MCF 10A (cell line): ENCODE measurements at regions of chr9 and their contacts with region 1.

Region 1: DNA sequence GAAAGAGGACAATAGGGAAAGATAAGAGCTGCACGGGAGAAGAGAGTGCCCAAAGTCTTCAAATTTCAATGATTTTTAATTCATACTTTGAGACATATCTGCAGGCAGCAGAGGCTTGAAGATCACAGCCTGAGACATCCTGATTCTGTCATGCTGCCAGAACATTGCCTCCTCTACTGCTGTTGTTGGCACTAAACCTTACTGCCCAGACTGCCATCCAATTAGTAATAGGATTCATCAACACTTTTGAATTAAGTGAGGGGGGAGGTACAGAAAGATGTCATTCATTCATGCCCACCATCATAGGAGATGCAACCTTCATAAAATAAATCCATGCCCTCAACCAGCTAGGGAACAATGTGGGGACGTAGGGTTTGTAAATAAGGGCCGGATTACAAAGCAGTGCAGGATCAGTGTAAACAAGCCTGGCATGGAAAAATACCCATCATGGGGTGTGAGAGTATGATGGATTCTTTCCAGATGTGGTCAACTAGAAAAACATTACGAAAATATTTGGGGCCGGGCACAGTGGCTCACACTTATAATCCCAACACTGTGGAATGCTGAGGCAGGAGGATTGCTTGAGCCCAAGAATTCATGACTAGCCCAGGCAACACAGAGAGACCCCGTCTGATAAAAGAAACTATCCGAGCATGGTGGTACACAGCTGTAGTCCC is 122.1 kb upstream of the DAPK1 start:
- DNase-seq: peak; percentile 91
- H3K4me3 Mint-ChIP-seq: peak overlapping the region; percentile 26
- H3K27ac Mint-ChIP-seq: peak overlapping the region; percentile 85
- H3K4me1 Mint-ChIP-seq: peaks cover 34% of the 10 kb centered on the region
- H3K27me3 Mint-ChIP-seq: no peaks in the 10 kb centered on the region
- CTCF ChIP-seq: no peak

Region 2: DNA sequence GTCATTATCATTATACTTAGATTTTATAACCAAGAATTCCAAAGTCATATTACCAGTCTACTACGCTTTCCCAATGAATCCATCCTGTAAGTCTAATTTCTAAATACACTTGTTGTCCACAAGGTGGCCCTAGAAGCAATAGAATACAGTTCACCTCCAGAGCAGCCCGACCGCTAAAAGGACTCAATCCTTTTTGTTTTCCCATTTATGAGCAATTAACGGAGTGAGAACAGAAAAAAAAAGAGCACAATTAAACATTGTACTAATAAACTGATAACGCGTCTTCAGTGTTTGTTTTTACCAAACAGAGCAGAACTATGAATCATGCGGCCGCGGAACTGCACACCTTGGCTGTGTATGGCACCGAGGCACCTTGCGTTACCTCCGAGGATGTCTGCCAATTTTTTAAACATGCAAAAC is 38.6 kb before region 1 on chr9:
- CTCF ChIA-PET with region 1: interaction called, 19 read pairs
- POLR2A ChIA-PET with region 1: interaction called, 79 read pairs
- intact Hi-C with region 1: loop called (anchors 1 kb)
- DNase-seq: peak; percentile 83
- H3K4me3 Mint-ChIP-seq: peak overlapping the region; percentile 80
- H3K27ac Mint-ChIP-seq: peak overlapping the region; percentile 61
- H3K4me1 Mint-ChIP-seq: peaks cover 19% of the 10 kb centered on the region
- H3K27me3 Mint-ChIP-seq: no peaks in the 10 kb centered on the region
- CTCF ChIP-seq: peak; percentile 73

Region 3: DNA sequence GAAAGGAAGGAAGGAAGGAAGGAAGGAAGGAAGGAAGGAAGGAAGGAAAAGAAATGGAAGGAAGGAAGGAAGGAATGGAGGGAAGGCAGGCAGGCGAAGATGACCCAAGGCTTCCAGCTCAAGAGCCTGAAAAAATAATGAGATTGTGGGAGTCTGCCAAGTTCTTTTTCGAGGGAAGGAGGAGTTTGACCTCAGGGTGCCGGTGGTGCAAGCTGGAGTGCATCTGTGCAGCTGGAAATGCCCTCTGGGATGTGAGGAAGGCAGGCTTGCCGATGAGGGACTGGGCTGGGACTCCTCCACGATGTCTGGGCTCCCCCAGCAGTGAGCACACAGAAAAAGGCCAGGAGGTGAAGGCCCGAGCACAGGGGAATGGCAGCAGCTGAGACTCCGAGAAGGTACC is 32.8 kb before region 1 on chr9:
- CTCF ChIA-PET with region 1: interaction called, 36 read pairs
- POLR2A ChIA-PET with region 1: interaction called, 79 read pairs
- intact Hi-C with region 1: no loop called
- DNase-seq: peak; percentile 54
- H3K4me3 Mint-ChIP-seq: peak overlapping the region; percentile 35
- H3K27ac Mint-ChIP-seq: no peak overlapping the region
- H3K4me1 Mint-ChIP-seq: peaks cover 37% of the 10 kb centered on the region
- H3K27me3 Mint-ChIP-seq: no peaks in the 10 kb centered on the region
- CTCF ChIP-seq: no peak

Region 4: DNA sequence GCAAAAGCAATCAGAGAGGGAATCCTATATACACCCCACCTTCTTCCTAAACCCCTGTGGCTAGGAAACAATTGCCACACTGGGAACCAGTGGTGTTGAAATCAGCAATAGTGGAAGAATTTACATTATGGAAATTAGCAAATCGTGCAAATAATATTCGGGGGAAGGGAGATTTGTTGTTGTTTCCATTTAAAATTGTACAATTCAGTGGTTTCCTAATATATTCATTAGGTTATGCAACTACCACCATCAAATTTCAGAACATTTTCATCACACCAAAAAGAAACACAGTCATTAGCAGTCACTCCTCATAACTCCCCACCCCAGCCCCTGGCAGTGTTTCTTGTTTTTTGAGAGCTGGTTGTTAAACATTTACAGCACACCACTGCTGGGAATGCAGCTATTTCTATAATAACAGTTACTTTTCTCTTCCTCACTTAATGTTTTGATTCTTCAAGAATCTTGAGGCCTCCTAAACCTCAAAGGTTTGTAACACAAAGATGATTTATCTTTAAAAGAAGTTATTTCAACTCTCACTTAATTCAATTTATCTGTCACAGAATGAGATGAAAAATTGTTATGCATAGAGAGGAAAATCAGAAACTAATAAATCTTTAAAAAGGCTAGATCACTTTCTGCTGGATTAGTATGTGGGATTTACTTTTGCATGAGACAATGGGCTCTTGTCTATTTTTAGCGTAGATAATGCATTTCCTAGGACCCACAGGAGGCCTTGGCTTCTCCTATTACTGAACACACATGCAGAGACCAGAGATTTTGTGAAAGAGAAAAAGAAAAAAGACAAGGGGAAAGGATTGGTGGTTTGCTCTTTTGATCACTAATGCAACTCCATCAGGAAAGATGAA is 30.4 kb after region 1 on chr9:
- CTCF ChIA-PET with region 1: interaction called, 6 read pairs
- POLR2A ChIA-PET with region 1: interaction called, 24 read pairs
- intact Hi-C with region 1: no loop called
- DNase-seq: peak; percentile 81
- H3K4me3 Mint-ChIP-seq: no peak overlapping the region
- H3K27ac Mint-ChIP-seq: peak overlapping the region; percentile 81
- H3K4me1 Mint-ChIP-seq: peaks cover 35% of the 10 kb centered on the region
- H3K27me3 Mint-ChIP-seq: no peaks in the 10 kb centered on the region
- CTCF ChIP-seq: no peak

Region 5: GRCh38 chr9:87464110-87464965 is 88.8 kb after region 1 on chr9:
- CTCF ChIA-PET with region 1: interaction called, 3 read pairs
- POLR2A ChIA-PET with region 1: interaction called, 12 read pairs
- intact Hi-C with region 1: loop called (anchors 1 kb)
- DNase-seq: peak; percentile 75
- H3K4me3 Mint-ChIP-seq: no peak overlapping the region
- H3K27ac Mint-ChIP-seq: peak overlapping the region; percentile 82
- H3K4me1 Mint-ChIP-seq: peaks cover 6% of the 10 kb centered on the region
- H3K27me3 Mint-ChIP-seq: no peaks in the 10 kb centered on the region
- CTCF ChIP-seq: no peak

Region 6: DNA sequence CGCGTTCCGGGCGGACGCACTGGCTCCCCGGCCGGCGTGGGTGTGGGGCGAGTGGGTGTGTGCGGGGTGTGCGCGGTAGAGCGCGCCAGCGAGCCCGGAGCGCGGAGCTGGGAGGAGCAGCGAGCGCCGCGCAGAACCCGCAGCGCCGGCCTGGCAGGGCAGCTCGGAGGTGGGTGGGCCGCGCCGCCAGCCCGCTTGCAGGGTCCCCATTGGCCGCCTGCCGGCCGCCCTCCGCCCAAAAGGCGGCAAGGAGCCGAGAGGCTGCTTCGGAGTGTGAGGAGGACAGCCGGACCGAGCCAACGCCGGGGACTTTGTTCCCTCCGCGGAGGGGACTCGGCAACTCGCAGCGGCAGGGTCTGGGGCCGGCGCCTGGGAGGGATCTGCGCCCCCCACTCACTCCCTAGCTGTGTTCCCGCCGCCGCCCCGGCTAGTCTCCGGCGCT is 122.1 kb after region 1 on chr9 and contains the start of gene DAPK1:
- CTCF ChIA-PET with region 1: interaction called, 5 read pairs
- POLR2A ChIA-PET with region 1: interaction called, 32 read pairs
- intact Hi-C with region 1: loop called (anchors 1 kb)
- DNase-seq: peak; percentile 12
- H3K4me3 Mint-ChIP-seq: peak within 1 kb of the TSS; percentile 73
- H3K27ac Mint-ChIP-seq: peak within 1 kb of the TSS; percentile 12
- H3K4me1 Mint-ChIP-seq: peaks cover 17% of the 10 kb centered on the region
- H3K27me3 Mint-ChIP-seq: no peaks in the 10 kb centered on the region
- CTCF ChIP-seq: no peak
- total RNA-seq, gene DAPK1: 19.7 and 35.7 TPM in 2 replicates